ENCODE measurements at regions of chr14 and their contacts with region 1.

Region 1: GRCh38 chr14:76050797-76051392 is 65.3 kb downstream of the IFT43 start:
- DNase-seq: peak; percentile 17
- H3K4me3 ChIP-seq: no peak overlapping the region
- CTCF ChIP-seq: peak; percentile 51

Region 2: DNA sequence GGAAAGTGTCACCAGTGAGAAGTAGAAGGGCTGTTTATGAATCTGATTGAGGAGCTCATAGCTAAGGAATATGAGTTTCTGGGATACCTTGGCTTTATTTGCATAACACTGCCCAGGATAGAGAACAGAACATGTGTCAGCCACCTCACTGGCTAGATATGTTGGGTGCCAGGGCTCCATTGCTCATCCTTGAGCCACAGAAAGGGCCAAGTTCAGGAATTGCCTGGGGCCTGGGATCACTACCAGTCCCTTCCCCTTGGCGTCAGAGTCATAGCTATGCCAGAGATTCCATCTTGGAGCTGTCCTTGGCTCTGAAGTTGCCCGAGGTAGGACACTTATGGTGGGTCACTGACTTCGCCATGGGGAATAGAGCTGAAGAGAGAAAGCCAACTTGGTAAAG is 16.3 kb before region 1 on chr14:
- CTCF ChIA-PET with region 1: interaction called, 15 read pairs
- POLR2A ChIA-PET with region 1: no interaction called
- DNase-seq: no peak
- H3K4me3 ChIP-seq: no peak overlapping the region
- CTCF ChIP-seq: no peak

Region 3: DNA sequence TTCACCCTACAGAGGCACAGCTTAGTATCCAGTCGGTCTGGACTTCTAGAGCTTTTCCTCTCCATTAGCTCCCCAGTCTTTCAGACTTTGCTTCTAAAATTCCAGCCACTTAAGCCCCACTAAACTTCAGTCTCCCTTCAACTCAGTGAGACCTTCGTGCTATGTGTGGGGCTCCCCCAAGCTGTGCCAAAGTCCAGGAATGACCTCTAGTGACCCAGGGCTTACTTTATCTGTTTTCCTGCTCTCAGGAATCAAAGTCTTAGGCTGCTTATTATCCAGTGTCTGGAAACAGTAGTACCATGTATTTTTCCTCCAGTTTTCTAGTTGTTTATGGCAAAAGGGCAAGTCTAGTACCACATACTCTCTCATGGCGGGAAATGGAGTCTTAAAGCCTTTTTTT is 12.4 kb after region 1 on chr14:
- CTCF ChIA-PET with region 1: interaction called, 12 read pairs
- POLR2A ChIA-PET with region 1: no interaction called
- DNase-seq: no peak
- H3K4me3 ChIP-seq: no peak overlapping the region
- CTCF ChIP-seq: no peak

Region 4: DNA sequence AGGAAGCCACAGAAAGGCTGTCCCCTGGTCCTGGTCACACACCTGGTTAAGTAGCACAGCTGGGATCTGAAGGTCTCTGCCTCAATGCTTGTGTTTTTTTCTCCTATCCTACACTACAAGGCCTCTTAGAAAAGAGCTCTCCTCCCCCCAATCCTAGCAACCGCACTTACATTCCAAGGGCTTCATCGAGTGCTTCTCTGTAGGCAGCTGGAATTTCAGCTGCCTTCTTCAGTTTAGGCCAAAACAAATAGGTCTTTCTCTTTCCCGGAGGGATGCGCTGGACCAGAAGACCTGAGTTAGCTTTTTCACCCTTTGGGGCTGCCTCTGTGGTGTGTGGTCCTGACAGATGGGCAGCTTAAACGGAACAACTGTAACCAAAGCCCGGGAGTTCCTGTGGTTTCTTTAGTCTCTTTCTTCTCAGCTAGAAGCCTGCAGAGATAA is 210.5 kb after region 1 on chr14:
- CTCF ChIA-PET with region 1: no interaction called
- POLR2A ChIA-PET with region 1: no interaction called
- DNase-seq: peak; percentile 26
- H3K4me3 ChIP-seq: no peak overlapping the region
- CTCF ChIP-seq: no peak

Region 5: GRCh38 chr14:76352639-76353281 is 301.9 kb after region 1 on chr14:
- CTCF ChIA-PET with region 1: interaction called, 198 read pairs
- POLR2A ChIA-PET with region 1: no interaction called
- DNase-seq: no peak
- H3K4me3 ChIP-seq: peak overlapping the region; percentile 38
- CTCF ChIP-seq: peak; percentile 94

Region 6: DNA sequence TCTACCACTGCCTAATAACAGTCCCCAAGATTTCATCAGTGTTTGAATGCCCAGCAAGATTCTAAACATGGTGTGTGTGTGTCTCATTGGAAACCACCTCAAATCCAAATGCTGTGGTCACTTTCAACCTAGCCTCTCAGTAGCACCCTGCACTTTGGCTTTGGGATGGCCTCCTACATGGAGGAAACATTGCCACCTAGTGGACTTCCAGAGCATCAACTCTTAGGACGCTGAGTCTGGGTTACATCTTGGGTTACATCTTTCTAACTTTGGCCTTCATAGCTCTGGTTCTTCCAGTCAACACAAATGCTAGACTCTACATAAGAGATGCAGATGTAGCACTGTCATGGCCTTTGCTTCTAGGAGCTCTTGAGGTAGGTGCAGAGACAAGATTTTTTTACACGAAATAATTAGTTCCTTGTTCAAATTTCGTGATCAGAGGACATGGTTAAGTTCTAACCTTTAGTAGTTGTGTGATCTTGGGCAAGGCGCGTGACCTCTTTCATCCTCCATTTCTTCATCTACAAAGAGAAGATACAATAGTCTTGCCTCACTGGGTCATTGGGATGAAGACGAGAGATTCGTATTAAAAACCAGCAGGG is 596.9 kb after region 1 on chr14:
- CTCF ChIA-PET with region 1: interaction called, 54 read pairs
- POLR2A ChIA-PET with region 1: no interaction called
- DNase-seq: no peak
- H3K4me3 ChIP-seq: no peak overlapping the region
- CTCF ChIP-seq: peak; percentile 80